GM12878 (cell line): ENCODE measurements at regions of chr11 and their contacts with region 1.

Region 1: DNA sequence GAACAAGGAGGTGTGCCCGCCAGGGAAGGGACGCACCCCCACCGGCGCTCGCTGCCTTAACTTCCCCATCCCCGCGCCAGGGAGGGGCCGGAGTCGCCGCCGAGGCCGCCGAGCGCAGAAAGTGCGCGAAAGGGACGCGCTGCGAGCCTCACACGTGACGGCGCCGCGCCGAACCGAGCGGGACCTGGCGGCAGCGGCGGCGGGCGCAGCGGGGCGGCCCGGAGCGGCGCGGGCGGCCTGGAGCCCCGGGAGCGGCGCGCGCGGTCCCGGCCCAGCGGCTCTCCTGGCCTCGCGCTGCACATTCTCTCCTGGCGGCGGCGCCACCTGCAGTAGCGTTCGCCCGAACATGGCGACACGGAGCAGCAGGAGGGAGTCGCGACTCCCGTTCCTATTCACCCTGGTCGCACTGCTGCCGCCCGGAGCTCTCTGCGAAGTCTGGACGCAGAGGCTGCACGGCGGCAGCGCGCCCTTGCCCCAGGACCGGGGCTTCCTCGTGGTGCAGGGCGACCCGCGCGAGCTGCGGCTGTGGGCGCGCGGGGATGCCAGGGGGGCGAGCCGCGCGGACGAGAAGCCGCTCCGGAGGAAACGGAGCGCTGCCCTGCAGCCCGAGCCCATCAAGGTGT is at the start of gene SORL1:
- DNase-seq: no peak
- ATAC-seq: peak; percentile 49
- H3K4me3 ChIP-seq: peak within 1 kb of the TSS; percentile 77
- H3K27ac ChIP-seq: peak within 1 kb of the TSS; percentile 76
- H3K4me1 ChIP-seq: peaks cover 49% of the 10 kb centered on the region
- H3K27me3 ChIP-seq: no peaks in the 10 kb centered on the region
- CTCF ChIP-seq: peak; percentile 48 to 73 (median 68)
- EP300 ChIP-seq: no peak
- POLR2A ChIP-seq: peak; percentile 87
- RAD21 ChIP-seq: peak; percentile 62
- polyA plus RNA-seq, gene SORL1: 20.2 to 26.0 TPM

Region 2: GRCh38 chr11:121328967-121329679 is 123.0 kb before region 1 on chr11:
- CTCF ChIA-PET with region 1: interaction called, 6 read pairs
- POLR2A ChIA-PET with region 1: interaction called, 5 read pairs
- RAD21 ChIA-PET with region 1: interaction called, 29 read pairs
- SMC1A ChIA-PET with region 1: interaction called, 11 read pairs
- in situ Hi-C with region 1: no loop called
- intact Hi-C with region 1: no loop called
- DNase-seq: no peak
- ATAC-seq: peak; percentile 68
- H3K4me3 ChIP-seq: no peak overlapping the region
- H3K27ac ChIP-seq: peak overlapping the region; percentile 13; the same call in 1 of the 2 replicates
- H3K4me1 ChIP-seq: peaks cover 18% of the 10 kb centered on the region
- H3K27me3 ChIP-seq: no peaks in the 10 kb centered on the region
- CTCF ChIP-seq: no peak
- EP300 ChIP-seq: no peak
- POLR2A ChIP-seq: no peak
- RAD21 ChIP-seq: no peak

Region 3: GRCh38 chr11:121372671-121373429 is 79.2 kb before region 1 on chr11:
- CTCF ChIA-PET with region 1: interaction called, 12 read pairs
- POLR2A ChIA-PET with region 1: interaction called, 25 read pairs
- RAD21 ChIA-PET with region 1: interaction called, 42 read pairs
- SMC1A ChIA-PET with region 1: interaction called, 101 read pairs
- in situ Hi-C with region 1: no loop called
- intact Hi-C with region 1: no loop called
- DNase-seq: peak; percentile 82
- ATAC-seq: peak; percentile 89
- H3K4me3 ChIP-seq: peak overlapping the region; percentile 46; the same call in 1 of the 2 replicates
- H3K27ac ChIP-seq: peak overlapping the region; percentile 80
- H3K4me1 ChIP-seq: peaks cover 53% of the 10 kb centered on the region
- H3K27me3 ChIP-seq: no peaks in the 10 kb centered on the region
- CTCF ChIP-seq: no peak
- EP300 ChIP-seq: no peak
- POLR2A ChIP-seq: peak; percentile 69
- RAD21 ChIP-seq: 0 out of 2 replicates have a peak, but pooled peaks have one; percentile 4

Region 4: GRCh38 chr11:121426476-121427399 is 25.4 kb before region 1 on chr11:
- CTCF ChIA-PET with region 1: interaction called, 10 read pairs
- POLR2A ChIA-PET with region 1: interaction called, 16 read pairs
- RAD21 ChIA-PET with region 1: interaction called, 50 read pairs
- SMC1A ChIA-PET with region 1: interaction called, 241 read pairs
- in situ Hi-C with region 1: no loop called
- intact Hi-C with region 1: no loop called
- DNase-seq: no peak
- ATAC-seq: peak; percentile 57
- H3K4me3 ChIP-seq: peak overlapping the region; percentile 39; the same call in 1 of the 2 replicates
- H3K27ac ChIP-seq: no peak overlapping the region
- H3K4me1 ChIP-seq: peaks cover 46% of the 10 kb centered on the region
- H3K27me3 ChIP-seq: no peaks in the 10 kb centered on the region
- CTCF ChIP-seq: peak in 2 of 3 experiments; percentile 14 to 21; a peak in 1 of 6 replicates
- EP300 ChIP-seq: no peak
- POLR2A ChIP-seq: no peak
- RAD21 ChIP-seq: no peak

Region 5: GRCh38 chr11:121464352-121464946 is 12.4 kb after region 1 on chr11:
- CTCF ChIA-PET with region 1: interaction called, 31 read pairs
- POLR2A ChIA-PET with region 1: interaction called, 86 read pairs
- RAD21 ChIA-PET with region 1: interaction called, 232 read pairs
- SMC1A ChIA-PET with region 1: interaction called, 266 read pairs
- in situ Hi-C with region 1: no loop called
- intact Hi-C with region 1: loop called (anchors 1 kb)
- DNase-seq: no peak
- ATAC-seq: peak; percentile 64
- H3K4me3 ChIP-seq: peak overlapping the region; percentile 57; the same call in 1 of the 2 replicates
- H3K27ac ChIP-seq: peak overlapping the region; percentile 83
- H3K4me1 ChIP-seq: peaks cover 91% of the 10 kb centered on the region
- H3K27me3 ChIP-seq: no peaks in the 10 kb centered on the region
- CTCF ChIP-seq: no peak
- EP300 ChIP-seq: no peak; a peak in 1 of 4 replicates
- POLR2A ChIP-seq: peak; percentile 72
- RAD21 ChIP-seq: no peak

Region 6: GRCh38 chr11:121494355-121495099 is 42.4 kb after region 1 on chr11:
- CTCF ChIA-PET with region 1: interaction called, 16 read pairs
- POLR2A ChIA-PET with region 1: interaction called, 4 read pairs
- RAD21 ChIA-PET with region 1: interaction called, 17 read pairs
- SMC1A ChIA-PET with region 1: interaction called, 32 read pairs
- in situ Hi-C with region 1: no loop called
- intact Hi-C with region 1: no loop called
- DNase-seq: peak; percentile 69
- ATAC-seq: peak; percentile 87
- H3K4me3 ChIP-seq: peak overlapping the region; percentile 24
- H3K27ac ChIP-seq: peak overlapping the region; percentile 66
- H3K4me1 ChIP-seq: peaks cover 32% of the 10 kb centered on the region
- H3K27me3 ChIP-seq: no peaks in the 10 kb centered on the region
- CTCF ChIP-seq: no peak
- EP300 ChIP-seq: no peak
- POLR2A ChIP-seq: no peak
- RAD21 ChIP-seq: no peak

Region 7: DNA sequence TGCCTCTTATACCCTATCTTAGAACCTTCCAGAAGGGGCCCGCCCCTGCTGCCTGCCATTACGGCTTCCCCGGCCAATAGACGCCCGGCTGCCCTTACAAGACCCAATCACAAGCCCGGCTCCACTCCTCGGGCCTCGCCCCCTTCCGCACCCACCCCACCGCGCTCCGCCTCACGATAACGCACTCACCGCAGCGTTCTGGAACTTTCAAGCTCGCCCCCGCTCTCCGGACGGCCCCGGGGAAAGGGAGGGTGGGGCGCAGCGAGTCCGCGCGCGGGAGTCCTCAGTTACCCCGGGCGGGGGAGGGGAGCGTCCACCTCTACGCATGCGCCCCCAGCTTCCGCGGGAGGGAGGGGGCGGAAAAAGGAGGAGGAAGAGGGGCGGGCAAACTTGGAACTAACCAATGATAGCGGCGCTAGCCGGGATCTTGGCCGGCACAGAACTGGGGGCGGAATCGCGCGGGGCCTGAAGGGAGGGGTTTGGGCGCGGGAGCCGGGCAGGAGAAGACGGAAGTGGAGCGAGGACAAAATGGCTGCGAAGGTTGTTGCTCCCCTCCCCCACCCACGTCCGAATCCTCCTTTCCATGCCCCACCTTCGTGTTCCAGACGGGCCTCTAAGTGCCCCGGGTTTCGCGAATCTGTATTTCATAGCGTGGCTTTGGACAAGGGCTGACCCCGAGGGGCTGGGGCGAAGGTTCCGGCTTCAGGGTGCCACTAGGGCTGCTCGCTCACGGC is 1610.2 kb after region 1 on chr11:
- CTCF ChIA-PET with region 1: no interaction called
- POLR2A ChIA-PET with region 1: no interaction called
- RAD21 ChIA-PET with region 1: no interaction called
- SMC1A ChIA-PET with region 1: no interaction called
- in situ Hi-C with region 1: loop called (anchors 25 kb)
- intact Hi-C with region 1: no loop called
- DNase-seq: peak; percentile 97
- ATAC-seq: peak; percentile 90
- H3K4me3 ChIP-seq: peak overlapping the region; percentile 73
- H3K27ac ChIP-seq: peak overlapping the region; percentile 100
- H3K4me1 ChIP-seq: peaks cover 14% of the 10 kb centered on the region; the same call in 1 of the 2 replicates
- H3K27me3 ChIP-seq: no peaks in the 10 kb centered on the region
- CTCF ChIP-seq: no peak
- EP300 ChIP-seq: no peak
- POLR2A ChIP-seq: no peak; the same call in none of the 2 replicates
- RAD21 ChIP-seq: no peak